ENCODE measurements at regions of chr3 and their contacts with region 1.

Region 1: DNA sequence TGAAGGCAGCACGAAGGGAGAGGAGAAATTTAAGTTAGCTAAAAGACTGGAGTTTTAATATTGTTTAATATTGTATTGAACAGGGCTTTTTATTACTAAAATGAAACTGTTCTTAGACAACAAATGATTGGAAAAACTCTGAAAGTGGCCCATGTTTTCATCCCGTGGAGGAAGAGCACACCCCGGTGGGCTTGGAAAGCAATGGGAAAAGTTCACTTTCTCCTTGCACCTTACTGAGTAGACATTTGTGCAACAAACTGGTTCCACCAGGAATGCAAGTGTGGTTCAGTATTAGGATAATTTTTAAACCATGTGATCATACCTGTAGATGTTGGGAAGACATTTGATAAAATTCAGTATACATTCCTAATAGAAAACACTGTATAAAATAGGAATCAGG is 8.2 kb upstream of the ESYT3 start:
- DNase-seq: peak in 1 of 4 donors; percentile 20
- ATAC-seq: no peak
- H3K4me3 ChIP-seq: no peak overlapping the region
- H3K27ac ChIP-seq: no peak overlapping the region
- H3K4me1 ChIP-seq: no peaks in the 10 kb centered on the region
- H3K27me3 ChIP-seq: peaks cover 0 to 2% of the 10 kb centered on the region in 2 donors
- CTCF ChIP-seq: peak; percentile 22 to 24

Region 2: DNA sequence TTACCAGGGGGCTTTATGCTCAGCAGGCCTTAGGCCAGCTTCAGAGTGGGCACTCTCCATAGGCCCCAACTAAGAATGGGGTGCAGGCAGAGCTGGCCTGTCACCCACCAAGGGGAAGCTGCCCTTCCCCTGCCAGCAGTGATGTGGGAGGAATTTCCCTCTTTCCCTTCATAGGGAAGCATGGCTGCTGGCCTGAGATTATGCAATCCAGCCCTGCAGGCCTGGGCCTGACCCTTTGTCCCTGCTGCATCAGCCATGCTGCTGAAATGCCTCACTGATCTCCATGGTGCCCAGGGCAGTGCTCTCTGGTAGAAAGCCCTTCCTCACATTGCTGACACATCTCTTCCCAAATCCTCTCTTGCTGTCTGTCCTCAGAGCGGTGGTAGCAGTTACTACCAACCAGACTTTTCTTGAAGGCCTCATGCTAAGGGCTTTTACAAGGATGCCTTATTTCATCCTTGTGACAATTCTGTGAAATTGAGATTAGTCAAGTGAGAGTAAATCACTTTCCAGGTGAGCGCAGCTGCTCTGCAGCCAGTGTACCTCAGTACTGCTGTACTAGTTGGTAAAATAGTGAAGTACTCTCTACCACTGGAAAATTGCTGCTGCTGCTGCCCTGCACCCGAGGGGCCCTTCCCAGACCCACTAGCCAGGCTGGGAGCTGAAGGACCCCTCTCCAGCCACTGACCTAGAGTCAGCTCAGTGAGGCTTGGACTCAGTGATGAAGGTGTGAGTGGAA is 44.1 kb before region 1 on chr3:
- intact Hi-C with region 1: no loop called
- DNase-seq: peak in 3 of 4 donors; percentile 25 to 84 (median 83)
- ATAC-seq: peak; percentile 96
- H3K4me3 ChIP-seq: no peak overlapping the region
- H3K27ac ChIP-seq: peak overlapping the region; percentile 48 to 78
- H3K4me1 ChIP-seq: peaks cover 18 to 21% of the 10 kb centered on the region in 2 donors
- H3K27me3 ChIP-seq: no peaks in the 10 kb centered on the region
- CTCF ChIP-seq: no peak

Region 3: DNA sequence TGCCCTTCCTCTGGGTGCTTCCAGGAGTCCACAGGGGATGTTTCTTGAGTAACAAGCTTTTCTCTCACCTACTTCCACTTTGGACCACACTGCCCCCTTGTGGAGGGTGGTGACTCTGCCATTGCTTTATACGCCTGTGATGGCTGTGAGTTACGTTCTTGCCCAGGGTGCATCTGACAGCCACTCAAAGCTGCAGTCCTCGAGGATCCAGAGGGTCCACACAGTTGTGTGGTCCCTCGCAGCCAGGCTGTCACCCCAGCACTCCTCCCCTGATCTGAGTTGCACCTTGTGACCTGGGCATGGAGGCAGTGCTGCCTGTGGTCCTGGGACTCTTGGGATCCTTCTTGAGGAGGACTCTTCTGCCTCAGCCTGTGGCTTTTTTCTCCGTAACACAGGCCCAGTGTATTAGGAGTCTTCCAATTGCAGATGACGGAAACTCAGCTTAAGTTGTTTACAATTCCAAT is 497.3 kb after region 1 on chr3:
- intact Hi-C with region 1: loop called in 1 of 2 experiments (anchors 10 kb)
- DNase-seq: peak in 3 of 4 donors; percentile 78 to 84 (median 83)
- ATAC-seq: peak; percentile 94
- H3K4me3 ChIP-seq: no peak overlapping the region
- H3K27ac ChIP-seq: no peak overlapping the region
- H3K4me1 ChIP-seq: peaks cover 0 to 8% of the 10 kb centered on the region in 2 donors
- H3K27me3 ChIP-seq: peaks cover 0 to 7% of the 10 kb centered on the region in 2 donors
- CTCF ChIP-seq: peak; percentile 85 to 91

Region 4: GRCh38 chr3:139506766-139507165 is 1080.5 kb after region 1 on chr3:
- intact Hi-C with region 1: no loop called
- DNase-seq: no peak
- ATAC-seq: no peak
- H3K4me3 ChIP-seq: no peak overlapping the region
- H3K27ac ChIP-seq: no peak overlapping the region
- H3K4me1 ChIP-seq: no peaks in the 10 kb centered on the region
- H3K27me3 ChIP-seq: no peaks in the 10 kb centered on the region
- CTCF ChIP-seq: no peak

Measured in left lung (tissue), 14 donors.